Esophagus muscularis mucosa (tissue), 4 donors: ENCODE measurements at regions of chr22 and their contacts with region 1.

Region 1: GRCh38 chr22:37933711-37934376 is 19.6 kb downstream of the C22orf23 start:
- DNase-seq: no peak
- H3K4me3 ChIP-seq: no peak overlapping the region
- H3K27ac ChIP-seq: peak overlapping the region; percentile 77 to 84 (median 80)
- H3K4me1 ChIP-seq: peaks cover 28 to 55% (median 54%) of the 10 kb centered on the region in 4 donors
- H3K27me3 ChIP-seq: no peaks in the 10 kb centered on the region
- CTCF ChIP-seq: peak; percentile 97 to 100 (median 98)
- EP300 ChIP-seq: no peak
- POLR2A ChIP-seq: no peak

Region 2: GRCh38 chr22:37887610-37888378 is 46.0 kb before region 1 on chr22:
- intact Hi-C with region 1: loop called (anchors 5 kb)
- DNase-seq: no peak
- H3K4me3 ChIP-seq: no peak overlapping the region
- H3K27ac ChIP-seq: peak overlapping the region; percentile 70 to 82 (median 79)
- H3K4me1 ChIP-seq: peaks cover 14 to 74% (median 68%) of the 10 kb centered on the region in 4 donors
- H3K27me3 ChIP-seq: no peaks in the 10 kb centered on the region
- CTCF ChIP-seq: peak; percentile 67 to 79 (median 72)
- EP300 ChIP-seq: no peak
- POLR2A ChIP-seq: no peak